HEK293T (cell line): ENCODE measurements at regions of chr3 and their contacts with region 1.

Region 1: DNA sequence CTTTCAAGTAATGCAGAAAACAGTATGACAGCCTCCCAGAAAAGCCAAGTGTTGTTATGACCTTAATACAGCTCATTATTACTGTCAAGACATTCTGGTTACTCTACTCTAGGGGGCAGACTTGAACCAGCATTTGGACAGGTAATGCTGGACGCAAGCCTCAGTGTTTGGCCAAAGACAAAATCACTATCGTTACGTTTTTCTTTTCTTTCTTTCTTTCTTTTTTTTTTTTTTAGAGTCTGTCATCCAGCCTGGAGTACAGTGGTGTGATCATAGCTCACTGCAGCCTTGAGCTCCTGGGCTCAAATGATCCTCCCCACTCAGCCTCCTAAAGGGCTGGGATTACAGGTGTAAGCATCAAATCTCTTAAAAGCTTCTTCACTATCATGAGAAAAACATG is 29.4 kb upstream of the TMEM45A start:
- DNase-seq: peak; percentile 67

Region 2: GRCh38 chr3:100480111-100480510 is 17.1 kb after region 1 on chr3:
- CTCF ChIA-PET with region 1: no interaction called
- POLR2A ChIA-PET with region 1: no interaction called
- DNase-seq: no peak

Region 3: GRCh38 chr3:100503448-100503847 is 40.4 kb after region 1 on chr3:
- CTCF ChIA-PET with region 1: no interaction called
- POLR2A ChIA-PET with region 1: no interaction called
- DNase-seq: no peak

Region 4: GRCh38 chr3:100590114-100590839 is 127.3 kb after region 1 on chr3:
- CTCF ChIA-PET with region 1: interaction called, 33 read pairs
- POLR2A ChIA-PET with region 1: interaction called, 3 read pairs
- DNase-seq: peak; percentile 77